Psoas muscle (tissue), 8 donors: ENCODE measurements at regions of chr4 and their contacts with region 1.

Region 1: DNA sequence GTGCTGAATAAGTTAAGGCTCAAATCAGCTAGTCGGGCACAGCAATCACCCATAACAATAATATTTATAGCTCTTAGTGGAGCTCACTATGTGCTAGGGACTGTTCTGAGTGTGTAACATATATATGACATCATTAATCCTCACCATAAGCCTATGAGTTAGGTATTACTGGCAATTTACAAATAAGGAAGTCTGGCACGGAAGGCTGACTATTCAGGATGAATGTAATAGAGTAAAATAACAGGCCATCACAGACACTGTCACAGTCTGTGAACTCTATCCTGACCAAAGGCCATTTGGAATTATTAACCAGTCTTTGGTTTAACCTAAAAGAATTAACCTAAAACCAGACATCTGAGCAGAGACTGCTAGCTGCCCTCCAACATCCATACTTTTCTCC is 119.3 kb downstream of the C4orf51 start:
- DNase-seq: no peak
- ATAC-seq: no peak
- H3K4me3 ChIP-seq: no peak overlapping the region
- H3K27ac ChIP-seq: peak overlapping the region; percentile 81
- H3K4me1 ChIP-seq: peaks cover 38% of the 10 kb centered on the region
- H3K27me3 ChIP-seq: no peaks in the 10 kb centered on the region
- CTCF ChIP-seq: no peak

Region 2: DNA sequence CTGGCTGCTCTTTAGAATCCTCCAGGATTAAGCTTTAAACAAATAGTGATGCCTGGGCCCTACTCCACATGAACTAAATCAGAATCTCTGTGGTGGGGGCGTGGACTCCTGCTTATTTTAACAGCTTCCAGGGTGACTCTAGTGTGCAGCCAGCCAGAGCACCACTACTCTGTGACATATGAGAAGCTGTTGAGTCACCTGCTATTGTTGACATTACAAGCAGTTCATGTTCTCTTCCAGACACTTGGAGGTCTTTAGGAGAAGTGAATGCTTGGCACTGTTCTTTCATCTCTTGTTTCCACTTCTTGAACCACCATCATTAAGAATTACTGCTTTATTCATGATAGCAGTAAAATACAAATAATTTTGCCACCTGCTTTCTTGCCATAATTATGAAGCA is 119.7 kb before region 1 on chr4:
- intact Hi-C with region 1: loop called in 1 of 2 experiments (anchors 10 kb)
- DNase-seq: peak; percentile 45 to 79
- ATAC-seq: peak; percentile 95 to 98 (median 96)
- H3K4me3 ChIP-seq: peak overlapping the region; percentile 46
- H3K27ac ChIP-seq: peak overlapping the region; percentile 93
- H3K4me1 ChIP-seq: peaks cover 16% of the 10 kb centered on the region
- H3K27me3 ChIP-seq: no peaks in the 10 kb centered on the region
- CTCF ChIP-seq: no peak